ENCODE measurements at regions of chr3 and their contacts with region 1.

Region 1: GRCh38 chr3:149736175-149736952 is 15.9 kb downstream of the COMMD2 start:
- DNase-seq: peak; percentile 74
- ATAC-seq: peak; percentile 43
- H3K4me3 ChIP-seq: no peak overlapping the region
- H3K27ac ChIP-seq: peak overlapping the region; percentile 7; the same call in 1 of the 2 replicates
- H3K4me1 ChIP-seq: peaks cover 28% of the 10 kb centered on the region
- H3K27me3 ChIP-seq: no peaks in the 10 kb centered on the region
- CTCF ChIP-seq: no peak

Region 2: GRCh38 chr3:149547938-149548668 is 188.3 kb before region 1 on chr3:
- CTCF ChIA-PET with region 1: no interaction called
- POLR2A ChIA-PET with region 1: no interaction called
- intact Hi-C with region 1: no loop called
- DNase-seq: peak; percentile 72
- ATAC-seq: peak; percentile 70
- H3K4me3 ChIP-seq: peak overlapping the region; percentile 3; the same call in 1 of the 2 replicates
- H3K27ac ChIP-seq: peak overlapping the region; percentile 88
- H3K4me1 ChIP-seq: peaks cover 22% of the 10 kb centered on the region
- H3K27me3 ChIP-seq: no peaks in the 10 kb centered on the region
- CTCF ChIP-seq: no peak

Region 3: GRCh38 chr3:149688112-149688757 is 48.1 kb before region 1 on chr3:
- CTCF ChIA-PET with region 1: no interaction called
- POLR2A ChIA-PET with region 1: interaction called, 16 read pairs
- intact Hi-C with region 1: no loop called
- DNase-seq: no peak
- ATAC-seq: no peak
- H3K4me3 ChIP-seq: no peak overlapping the region
- H3K27ac ChIP-seq: no peak overlapping the region
- H3K4me1 ChIP-seq: no peaks in the 10 kb centered on the region
- H3K27me3 ChIP-seq: no peaks in the 10 kb centered on the region
- CTCF ChIP-seq: no peak

Region 4: GRCh38 chr3:149879872-149880271 is 143.5 kb after region 1 on chr3:
- CTCF ChIA-PET with region 1: no interaction called
- POLR2A ChIA-PET with region 1: no interaction called
- intact Hi-C with region 1: no loop called
- DNase-seq: peak; percentile 74
- ATAC-seq: peak; percentile 98
- H3K4me3 ChIP-seq: no peak overlapping the region
- H3K27ac ChIP-seq: no peak overlapping the region
- H3K4me1 ChIP-seq: no peaks in the 10 kb centered on the region
- H3K27me3 ChIP-seq: no peaks in the 10 kb centered on the region
- CTCF ChIP-seq: peak; percentile 85